Gastrocnemius medialis (tissue), 4 donors: ENCODE measurements at regions of chr18 and their contacts with region 1.

Region 1: DNA sequence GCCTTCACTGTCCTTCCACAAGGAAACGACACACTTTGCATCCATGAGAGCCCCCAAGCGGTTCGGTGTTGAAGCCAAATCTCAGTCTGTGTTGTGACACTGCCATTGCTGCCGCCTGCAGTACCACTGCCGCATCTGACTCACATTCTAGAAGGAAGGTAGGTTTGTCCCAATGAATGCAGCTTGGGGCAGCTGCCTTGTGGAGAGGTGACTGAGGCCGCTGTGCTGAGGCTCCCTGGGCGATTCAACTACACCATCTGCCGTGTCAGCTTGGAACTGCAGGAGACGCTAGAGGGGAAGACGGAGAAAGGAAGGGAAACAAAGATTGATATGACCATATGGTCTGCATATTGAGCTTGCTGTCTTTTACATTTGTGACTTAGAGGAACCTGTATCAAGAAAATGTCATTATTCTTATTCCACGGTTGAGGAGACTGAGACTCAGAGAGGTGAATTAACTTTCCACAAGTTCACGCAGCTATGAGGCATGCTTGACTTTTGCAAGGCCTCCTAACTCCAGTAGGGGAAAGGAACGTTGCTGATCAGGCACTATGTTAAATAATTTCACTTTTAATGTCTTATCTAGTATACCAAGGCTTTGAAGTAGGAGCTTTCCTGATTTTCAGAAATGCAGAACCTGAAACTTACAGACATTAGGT is 43.5 kb upstream of the LMAN1 start:
- DNase-seq: peak; percentile 53 to 67
- ATAC-seq: peak; percentile 86 to 99
- H3K4me3 ChIP-seq: no peak overlapping the region
- H3K27ac ChIP-seq: no peak overlapping the region
- H3K4me1 ChIP-seq: no peaks in the 10 kb centered on the region
- H3K27me3 ChIP-seq: no peaks in the 10 kb centered on the region
- CTCF ChIP-seq: peak; percentile 79 to 96 (median 89)
- POLR2A ChIP-seq: no peak

Region 2: DNA sequence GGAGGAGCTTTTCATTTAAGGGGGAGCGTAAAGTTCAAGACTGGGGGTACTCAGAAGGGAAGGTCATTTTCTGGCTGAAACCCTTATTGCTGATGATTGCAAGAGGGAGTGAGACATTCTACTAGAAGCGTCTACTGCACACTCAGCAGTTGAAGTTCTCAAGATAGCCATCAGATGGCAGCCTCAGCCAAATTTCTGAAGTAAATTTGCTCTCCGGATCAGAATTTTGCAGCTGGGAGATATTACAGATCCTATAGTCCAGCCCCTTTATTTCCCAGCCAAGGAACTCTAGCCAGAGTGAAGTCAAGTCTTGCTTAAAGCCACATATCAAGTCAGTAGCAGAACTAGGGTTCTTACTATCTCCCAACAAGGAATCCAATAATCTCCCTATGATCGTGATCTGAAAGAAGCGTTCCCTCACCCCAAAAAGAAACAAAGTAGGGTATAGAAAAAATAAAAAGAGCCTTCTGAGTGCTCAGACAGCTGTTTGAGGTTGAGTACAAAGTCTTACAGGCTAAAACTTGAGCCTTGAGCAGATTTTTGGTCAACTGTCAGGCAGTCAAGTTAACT is 153.3 kb before region 1 on chr18:
- in situ Hi-C with region 1: no loop called
- intact Hi-C with region 1: loop called (anchors 2 kb)
- DNase-seq: no peak
- ATAC-seq: peak; percentile 23 to 58
- H3K4me3 ChIP-seq: no peak overlapping the region
- H3K27ac ChIP-seq: no peak overlapping the region
- H3K4me1 ChIP-seq: no peaks in the 10 kb centered on the region
- H3K27me3 ChIP-seq: peaks cover 9 to 10% (median 9%) of the 10 kb centered on the region in 3 donors
- CTCF ChIP-seq: peak in 4 of 5 experiments; percentile 31 to 59 (median 52)
- POLR2A ChIP-seq: no peak

Region 3: GRCh38 chr18:59308248-59308937 is 94.2 kb before region 1 on chr18:
- in situ Hi-C with region 1: loop called in 3 of 4 experiments (anchors 5 to 25 kb)
- intact Hi-C with region 1: loop called (anchors 2 kb)
- DNase-seq: peak; percentile 36 to 58
- ATAC-seq: peak; percentile 92 to 97
- H3K4me3 ChIP-seq: peak overlapping the region; percentile 13 to 57 (median 42)
- H3K27ac ChIP-seq: no peak overlapping the region
- H3K4me1 ChIP-seq: no peaks in the 10 kb centered on the region
- H3K27me3 ChIP-seq: peaks cover 0 to 6% (median 3%) of the 10 kb centered on the region in 3 donors
- CTCF ChIP-seq: peak; percentile 60 to 82 (median 79)
- POLR2A ChIP-seq: no peak

Region 4: DNA sequence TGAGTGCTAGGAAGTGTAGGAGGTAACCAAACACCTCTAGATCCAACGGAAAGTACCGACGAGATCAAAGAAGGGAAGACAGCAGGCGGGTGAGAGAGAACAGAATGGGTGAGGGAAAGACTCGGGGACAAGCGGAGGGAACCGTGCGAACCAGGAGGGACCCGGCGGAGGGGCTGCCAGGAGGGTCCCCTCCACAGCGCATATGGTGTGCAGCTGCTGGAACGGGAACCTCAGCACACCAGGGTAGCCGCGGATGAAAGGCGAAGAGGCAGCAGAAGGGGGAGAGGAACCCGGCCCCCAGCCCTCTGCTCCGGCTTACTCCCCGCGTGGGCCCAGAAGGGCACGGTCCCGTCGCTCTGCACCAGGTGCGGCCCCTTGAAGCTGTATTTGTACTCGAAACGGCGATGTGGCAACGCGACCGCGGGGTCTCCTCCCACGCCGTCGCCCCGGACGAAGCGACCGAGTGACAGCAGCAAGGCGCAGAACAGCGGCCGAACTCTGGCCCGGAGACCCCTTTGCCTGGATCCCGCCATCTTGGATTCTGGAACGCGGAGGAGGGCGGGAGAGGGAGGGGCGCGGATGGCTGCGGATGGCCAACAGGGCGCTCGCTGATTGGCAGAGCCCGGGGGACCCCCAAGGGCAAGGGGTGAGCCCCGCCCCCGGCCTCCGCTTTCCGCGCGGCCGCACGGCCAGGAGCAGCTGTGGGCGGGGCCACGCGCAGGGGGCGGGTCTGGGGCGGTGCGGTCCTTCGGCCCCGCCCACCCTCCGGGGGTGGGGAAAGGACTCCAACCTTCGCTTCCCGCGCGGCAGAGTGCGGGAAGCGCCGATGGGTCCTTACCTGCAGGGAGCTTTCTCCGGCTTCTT is 43.6 kb before region 1 on chr18 and contains the start of gene LMAN1:
- in situ Hi-C with region 1: no loop called
- intact Hi-C with region 1: loop called (anchors 2 kb)
- DNase-seq: peak; percentile 92 to 93
- ATAC-seq: peak; percentile 88 to 90
- H3K4me3 ChIP-seq: peak within 1 kb of the TSS; percentile 91 to 96 (median 94)
- H3K27ac ChIP-seq: peak within 1 kb of the TSS; percentile 91 to 98 (median 96)
- H3K4me1 ChIP-seq: peaks cover 18 to 25% of the 10 kb centered on the region in 2 donors
- H3K27me3 ChIP-seq: no peaks in the 10 kb centered on the region
- CTCF ChIP-seq: no peak
- POLR2A ChIP-seq: peak; percentile 56 to 58
- total RNA-seq, gene LMAN1: 48.6 to 74.8 (median 59.2) TPM

Region 5: GRCh38 chr18:59802031-59802430 is 399.5 kb after region 1 on chr18:
- in situ Hi-C with region 1: no loop called
- intact Hi-C with region 1: no loop called
- DNase-seq: no peak
- ATAC-seq: no peak
- H3K4me3 ChIP-seq: no peak overlapping the region
- H3K27ac ChIP-seq: no peak overlapping the region
- H3K4me1 ChIP-seq: no peaks in the 10 kb centered on the region
- H3K27me3 ChIP-seq: no peaks in the 10 kb centered on the region
- CTCF ChIP-seq: no peak
- POLR2A ChIP-seq: no peak